ENCODE measurements at regions of chr4 and their contacts with region 1.

Region 1: DNA sequence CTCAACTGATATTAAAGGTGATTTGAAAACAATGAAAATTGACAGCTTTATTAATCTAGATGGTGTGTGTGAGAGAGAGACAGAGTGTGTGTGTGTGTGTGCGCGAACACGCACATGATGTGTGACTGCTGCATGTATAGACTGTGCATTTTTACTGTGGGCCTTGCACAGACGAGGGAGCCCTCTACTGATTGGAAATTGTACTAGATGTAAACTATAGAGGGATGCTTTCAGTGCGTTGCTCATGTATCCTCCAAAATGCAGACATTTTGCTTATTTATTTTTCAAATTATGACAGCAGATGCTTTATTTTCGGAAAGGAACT is 168.4 kb upstream of the GK2 start:
- DNase-seq: no peak
- H3K4me3 ChIP-seq: no peak overlapping the region
- H3K27ac ChIP-seq: no peak overlapping the region
- H3K4me1 ChIP-seq: no peaks in the 10 kb centered on the region
- H3K27me3 ChIP-seq: no peaks in the 10 kb centered on the region
- CTCF ChIP-seq: peak; percentile 31

Region 2: DNA sequence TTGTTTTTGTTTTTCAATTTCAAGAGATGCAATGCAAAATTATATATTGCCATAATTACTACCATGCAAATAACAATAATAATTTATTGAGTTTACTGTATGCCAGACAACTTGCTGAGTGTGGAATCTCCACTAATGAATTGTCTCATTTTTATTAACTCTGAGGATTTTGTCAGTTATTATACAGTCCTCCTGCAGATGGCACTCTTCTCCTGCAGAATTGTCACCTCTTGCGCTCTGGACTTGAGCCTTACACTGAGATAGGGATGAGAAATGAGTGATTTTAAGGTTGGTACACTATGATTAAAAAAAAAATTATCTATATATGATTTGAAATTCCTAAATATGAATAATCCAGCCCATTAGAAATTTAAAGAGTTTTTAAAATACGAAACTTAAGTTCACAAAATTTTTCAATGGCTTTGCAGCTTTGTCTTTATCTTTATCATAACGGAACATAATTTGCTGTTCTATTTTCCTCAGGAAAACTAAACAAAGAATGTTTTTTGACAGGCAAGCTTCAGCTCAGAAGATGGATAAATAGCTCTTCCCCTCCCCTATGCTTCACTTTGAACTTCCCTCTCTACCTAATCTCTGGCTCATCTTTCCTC is 624.4 kb before region 1 on chr4:
- intact Hi-C with region 1: loop called (anchors 5 kb)
- DNase-seq: no peak
- H3K4me3 ChIP-seq: no peak overlapping the region
- H3K27ac ChIP-seq: no peak overlapping the region
- H3K4me1 ChIP-seq: no peaks in the 10 kb centered on the region
- H3K27me3 ChIP-seq: no peaks in the 10 kb centered on the region
- CTCF ChIP-seq: peak; percentile 44

Region 3: GRCh38 chr4:79042079-79042674 is 534.2 kb before region 1 on chr4:
- intact Hi-C with region 1: loop called (anchors 5 kb)
- DNase-seq: peak; percentile 35
- H3K4me3 ChIP-seq: no peak overlapping the region
- H3K27ac ChIP-seq: no peak overlapping the region
- H3K4me1 ChIP-seq: no peaks in the 10 kb centered on the region
- H3K27me3 ChIP-seq: no peaks in the 10 kb centered on the region
- CTCF ChIP-seq: peak; percentile 43

Region 4: GRCh38 chr4:79249881-79250503 is 326.4 kb before region 1 on chr4:
- intact Hi-C with region 1: loop called (anchors 10 kb)
- DNase-seq: no peak
- H3K4me3 ChIP-seq: no peak overlapping the region
- H3K27ac ChIP-seq: no peak overlapping the region
- H3K4me1 ChIP-seq: no peaks in the 10 kb centered on the region
- H3K27me3 ChIP-seq: no peaks in the 10 kb centered on the region
- CTCF ChIP-seq: no peak